ENCODE measurements at regions of chr20 and their contacts with region 1.

Region 1: GRCh38 chr20:34955232-34956040 is at the starts of genes GSS and MYH7B:
- DNase-seq: peak; percentile 100
- H3K27ac ChIP-seq: peak within 1 kb of the TSS; percentile 88
- CTCF ChIP-seq: peak; percentile 82

Region 2: GRCh38 chr20:34834459-34834893 is 121.0 kb before region 1 on chr20:
- CTCF ChIA-PET with region 1: interaction called, 12 read pairs
- POLR2A ChIA-PET with region 1: no interaction called
- DNase-seq: peak; percentile 64
- H3K27ac ChIP-seq: no peak overlapping the region
- CTCF ChIP-seq: peak; percentile 61

Region 3: GRCh38 chr20:35039146-35039545 is 83.7 kb after region 1 on chr20:
- CTCF ChIA-PET with region 1: no interaction called
- POLR2A ChIA-PET with region 1: no interaction called
- DNase-seq: peak; percentile 64
- H3K27ac ChIP-seq: no peak overlapping the region
- CTCF ChIP-seq: no peak